ENCODE measurements at regions of chr6 and their contacts with region 1.

Region 1: GRCh38 chr6:35601331-35602132 is 87.2 kb downstream of the FKBP5 start:
- DNase-seq: peak; percentile 86 to 88
- H3K4me3 ChIP-seq: peak overlapping the region; percentile 0 to 30
- H3K27ac ChIP-seq: peak overlapping the region; percentile 88 to 93
- H3K4me1 ChIP-seq: peaks cover 6 to 92% (median 73%) of the 10 kb centered on the region in 4 donors
- H3K27me3 ChIP-seq: no peaks in the 10 kb centered on the region
- CTCF ChIP-seq: no peak

Region 2: GRCh38 chr6:35259194-35259947 is 342.2 kb before region 1 on chr6 and contains the start of gene ZNF76:
- intact Hi-C with region 1: no loop called
- DNase-seq: peak; percentile 97 to 99
- H3K4me3 ChIP-seq: peak within 1 kb of the TSS; percentile 80 to 94
- H3K27ac ChIP-seq: peak within 1 kb of the TSS; percentile 98
- H3K4me1 ChIP-seq: peaks cover 0 to 65% (median 22%) of the 10 kb centered on the region in 4 donors
- H3K27me3 ChIP-seq: no peaks in the 10 kb centered on the region
- CTCF ChIP-seq: peak in 1 of 2 experiments; percentile 74

Region 3: GRCh38 chr6:35731736-35732532 is 130.4 kb after region 1 on chr6:
- intact Hi-C with region 1: loop called (anchors 5 kb)
- DNase-seq: peak; percentile 97 to 99
- H3K4me3 ChIP-seq: peak overlapping the region; percentile 59 to 74
- H3K27ac ChIP-seq: peak overlapping the region; percentile 97 to 99
- H3K4me1 ChIP-seq: peaks cover 6 to 94% (median 70%) of the 10 kb centered on the region in 4 donors
- H3K27me3 ChIP-seq: no peaks in the 10 kb centered on the region
- CTCF ChIP-seq: peak; percentile 6 to 24

Measured in tibial artery (tissue), 4 donors.